Prostate gland (tissue), 2 donors: ENCODE measurements at regions of chr15 and their contacts with region 1.

Region 1: GRCh38 chr15:72231066-72231846 is at the start of gene PKM:
- DNase-seq: peak; percentile 97
- H3K4me3 ChIP-seq: peak within 1 kb of the TSS; percentile 74 to 95
- H3K27ac ChIP-seq: peak within 1 kb of the TSS; percentile 96 to 98
- H3K4me1 ChIP-seq: peaks cover 23% of the 10 kb centered on the region
- H3K27me3 ChIP-seq: no peaks in the 10 kb centered on the region
- CTCF ChIP-seq: peak in 1 of 4 experiments; percentile 16
- POLR2A ChIP-seq: peak; percentile 96
- total RNA-seq, gene PKM: 470 to 513 TPM

Region 2: DNA sequence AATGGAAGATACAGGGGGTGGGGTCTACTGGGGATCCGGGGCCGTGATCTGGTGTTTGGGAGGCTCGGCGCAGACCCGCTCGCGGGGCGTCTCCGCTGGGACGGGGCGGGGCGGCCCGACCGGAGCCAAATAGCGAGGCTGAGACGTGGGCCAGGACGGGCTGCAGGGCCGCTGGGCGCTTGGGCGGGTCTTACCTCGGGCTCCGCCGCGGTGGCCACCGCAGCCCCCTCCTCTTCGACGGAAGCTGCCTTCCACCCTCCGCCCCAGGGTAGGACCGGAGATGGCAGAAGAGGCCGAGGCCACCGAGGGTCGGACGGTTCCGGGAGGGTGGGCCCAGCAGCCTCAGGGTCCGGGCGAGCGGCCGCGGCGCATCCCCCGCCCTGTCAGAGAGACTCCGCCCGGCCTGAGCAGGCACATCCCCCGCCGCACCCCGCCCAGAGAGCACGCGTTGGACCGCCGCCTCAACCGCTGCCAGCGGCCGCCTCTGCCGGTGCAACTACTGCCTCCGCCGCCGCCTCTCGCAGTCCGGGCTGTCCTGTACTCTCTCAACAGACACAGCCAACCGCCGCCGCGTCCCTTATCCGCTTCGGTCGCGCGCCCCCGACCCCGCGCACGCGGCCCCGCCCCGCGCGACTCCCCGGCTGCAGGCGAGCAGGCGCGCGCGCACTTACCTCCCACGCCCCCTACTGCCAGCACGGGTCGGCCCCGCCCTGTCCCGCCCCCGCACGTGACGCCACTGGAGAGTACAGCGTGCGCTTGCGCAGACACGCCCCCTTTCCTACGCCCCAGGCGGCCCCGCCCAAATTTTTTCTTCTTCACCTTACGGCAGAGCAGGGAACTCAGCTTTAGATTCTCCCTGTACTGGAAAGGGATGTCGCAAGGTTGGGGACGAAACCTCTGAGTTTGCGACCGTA is 113.5 kb before region 1 on chr15 and contains the start of gene MYO9A:
- intact Hi-C with region 1: loop called (anchors 10 kb)
- DNase-seq: peak; percentile 98
- H3K4me3 ChIP-seq: peak within 1 kb of the TSS; percentile 70 to 93
- H3K27ac ChIP-seq: peak within 1 kb of the TSS; percentile 94 to 96
- H3K4me1 ChIP-seq: peaks cover 7% of the 10 kb centered on the region
- H3K27me3 ChIP-seq: no peaks in the 10 kb centered on the region
- CTCF ChIP-seq: peak; percentile 35 to 66 (median 40)
- POLR2A ChIP-seq: peak; percentile 86
- total RNA-seq, gene MYO9A: 29.4 to 252 TPM

Region 3: DNA sequence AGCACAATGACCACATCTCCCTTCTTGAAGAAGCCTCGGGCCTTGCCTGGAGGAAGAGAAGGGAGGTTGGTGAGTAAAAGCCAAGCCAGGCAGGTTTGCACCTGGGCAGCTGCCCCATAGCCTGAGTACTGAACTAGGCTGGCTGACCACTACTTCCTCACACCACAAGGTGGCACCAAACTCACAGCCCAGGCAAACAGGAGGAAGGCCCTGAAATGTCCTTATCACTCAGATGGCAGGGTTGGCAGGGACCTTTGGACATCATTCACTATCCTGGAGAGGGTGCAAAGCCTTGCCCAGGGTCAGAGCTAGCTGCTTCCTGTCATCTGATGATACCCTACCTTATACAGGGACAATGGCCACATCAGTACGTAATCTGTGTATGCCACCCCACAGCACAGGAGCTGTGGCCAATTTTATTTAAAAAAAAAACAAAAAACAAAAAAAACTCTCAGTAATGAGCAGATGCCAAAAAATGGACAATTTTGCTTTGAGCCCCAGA is 31.5 kb before region 1 on chr15:
- intact Hi-C with region 1: loop called (anchors 5 kb)
- DNase-seq: peak; percentile 87
- H3K4me3 ChIP-seq: no peak overlapping the region
- H3K27ac ChIP-seq: no peak overlapping the region
- H3K4me1 ChIP-seq: no peaks in the 10 kb centered on the region
- H3K27me3 ChIP-seq: no peaks in the 10 kb centered on the region
- CTCF ChIP-seq: peak; percentile 64 to 94 (median 88)
- POLR2A ChIP-seq: no peak

Region 4: DNA sequence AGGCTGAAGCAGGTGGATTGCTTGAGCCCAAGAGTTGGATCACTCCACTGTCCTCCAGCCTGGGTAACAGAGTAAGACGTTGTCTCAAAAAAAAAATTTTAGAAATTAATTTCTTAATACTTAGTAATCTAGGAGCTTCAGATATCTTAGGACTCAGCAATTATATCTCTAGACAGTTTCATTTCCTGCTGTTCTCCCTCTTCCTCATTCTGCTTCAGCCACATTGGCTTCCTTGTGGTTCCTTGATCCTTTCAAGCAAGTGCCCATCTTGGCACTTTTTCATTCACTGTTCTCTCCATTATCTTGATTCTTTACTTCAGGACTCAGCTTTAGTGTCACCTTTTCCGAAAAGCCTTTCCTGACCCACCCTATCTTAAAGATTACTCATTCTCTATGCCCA is 189.3 kb after region 1 on chr15:
- intact Hi-C with region 1: no loop called
- DNase-seq: no peak
- H3K4me3 ChIP-seq: no peak overlapping the region
- H3K27ac ChIP-seq: no peak overlapping the region
- H3K4me1 ChIP-seq: no peaks in the 10 kb centered on the region
- H3K27me3 ChIP-seq: no peaks in the 10 kb centered on the region
- CTCF ChIP-seq: no peak
- POLR2A ChIP-seq: no peak

Region 5: GRCh38 chr15:72503147-72503546 is 271.9 kb after region 1 on chr15:
- intact Hi-C with region 1: no loop called
- DNase-seq: no peak
- H3K4me3 ChIP-seq: no peak overlapping the region
- H3K27ac ChIP-seq: no peak overlapping the region
- H3K4me1 ChIP-seq: no peaks in the 10 kb centered on the region
- H3K27me3 ChIP-seq: no peaks in the 10 kb centered on the region
- CTCF ChIP-seq: no peak
- POLR2A ChIP-seq: no peak

Region 6: GRCh38 chr15:72933976-72934375 is 702.7 kb after region 1 on chr15:
- intact Hi-C with region 1: no loop called
- DNase-seq: no peak
- H3K4me3 ChIP-seq: no peak overlapping the region
- H3K27ac ChIP-seq: no peak overlapping the region
- H3K4me1 ChIP-seq: no peaks in the 10 kb centered on the region
- H3K27me3 ChIP-seq: no peaks in the 10 kb centered on the region
- CTCF ChIP-seq: no peak
- POLR2A ChIP-seq: no peak